CD8-positive, alpha-beta T cell (primary cell): ENCODE measurements at regions of chrX and their contacts with region 1.

Region 1: DNA sequence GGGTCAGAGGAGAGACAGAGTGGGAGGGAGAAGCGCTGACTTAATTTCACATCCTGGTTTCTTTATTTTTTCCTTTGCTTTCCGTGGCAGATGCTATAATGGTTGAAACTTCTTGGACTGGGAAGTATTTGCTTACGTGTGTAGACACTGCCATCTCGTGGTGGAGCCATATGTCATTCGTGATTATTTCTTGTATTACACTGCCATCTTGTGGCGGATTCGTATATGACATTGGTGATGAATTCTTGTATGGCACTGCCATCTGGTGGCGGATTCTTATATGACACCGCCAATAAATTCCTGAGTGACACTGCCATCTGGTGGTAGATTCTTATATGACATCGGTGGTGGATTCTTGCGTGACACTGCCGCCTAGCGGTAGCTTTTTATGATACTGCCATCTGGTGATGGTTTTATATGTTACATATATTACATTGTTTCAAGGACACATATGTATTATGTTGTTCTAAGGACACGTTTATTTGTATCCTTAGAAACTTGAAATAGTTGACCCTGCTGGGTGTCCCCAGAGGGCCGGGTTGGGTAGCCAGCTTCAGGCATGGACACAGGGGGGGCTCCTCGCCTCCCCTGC is 37.3 kb upstream of the CLCN4 start:
- DNase-seq: peak; percentile 43 to 90 (median 67)
- ATAC-seq: peak; percentile 72
- H3K4me3 ChIP-seq: no peak overlapping the region
- H3K4me3 Mint-ChIP-seq: no peak overlapping the region
- H3K27ac ChIP-seq: peak overlapping the region in 1 of 2 experiments; percentile 36
- H3K27ac Mint-ChIP-seq: peak overlapping the region; percentile 34
- H3K4me1 ChIP-seq: no peaks in the 10 kb centered on the region
- H3K4me1 Mint-ChIP-seq: peaks cover 25% of the 10 kb centered on the region
- H3K27me3 ChIP-seq: no peaks in the 10 kb centered on the region
- H3K27me3 Mint-ChIP-seq: no peaks in the 10 kb centered on the region
- CTCF ChIP-seq: peak; percentile 99

Region 2: DNA sequence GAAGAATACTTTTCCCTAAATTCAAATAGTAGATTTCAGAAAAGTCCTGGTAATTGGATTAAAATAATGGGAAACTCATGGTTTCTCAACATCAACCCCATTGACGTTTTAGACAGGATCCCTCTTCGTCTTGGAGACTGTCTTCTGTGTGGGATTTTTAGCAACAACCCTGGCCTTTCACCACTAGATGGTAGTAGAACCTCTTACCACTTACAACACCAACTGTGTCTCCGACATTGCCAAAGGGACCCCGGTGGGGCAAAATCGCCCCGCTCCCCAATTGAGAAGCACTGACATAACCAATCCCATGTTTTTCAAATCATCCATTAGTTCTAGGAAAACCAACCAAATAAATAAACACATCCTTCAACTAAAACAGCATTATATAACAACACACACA is 1370.6 kb before region 1 on chrX:
- CTCF ChIA-PET with region 1: interaction called, 4 read pairs
- POLR2A ChIA-PET with region 1: no interaction called
- intact Hi-C with region 1: loop called in 1 of 2 experiments (anchors 2 kb)
- DNase-seq: peak in 2 of 9 experiments; percentile 30 to 46
- ATAC-seq: no peak
- H3K4me3 ChIP-seq: no peak overlapping the region
- H3K4me3 Mint-ChIP-seq: no peak overlapping the region
- H3K27ac ChIP-seq: no peak overlapping the region
- H3K27ac Mint-ChIP-seq: no peak overlapping the region
- H3K4me1 ChIP-seq: no peaks in the 10 kb centered on the region
- H3K4me1 Mint-ChIP-seq: peaks cover 3% of the 10 kb centered on the region
- H3K27me3 ChIP-seq: no peaks in the 10 kb centered on the region
- H3K27me3 Mint-ChIP-seq: peaks cover 7% of the 10 kb centered on the region
- CTCF ChIP-seq: peak; percentile 49

Region 3: GRCh38 chrX:9873952-9874351 is 245.5 kb before region 1 on chrX:
- CTCF ChIA-PET with region 1: interaction called, 10 read pairs
- POLR2A ChIA-PET with region 1: no interaction called
- intact Hi-C with region 1: loop called (anchors 2 kb)
- DNase-seq: peak in 7 of 9 experiments; percentile 0 to 54 (median 17)
- ATAC-seq: peak; percentile 77
- H3K4me3 ChIP-seq: no peak overlapping the region
- H3K4me3 Mint-ChIP-seq: no peak overlapping the region
- H3K27ac ChIP-seq: no peak overlapping the region
- H3K27ac Mint-ChIP-seq: no peak overlapping the region
- H3K4me1 ChIP-seq: no peaks in the 10 kb centered on the region
- H3K4me1 Mint-ChIP-seq: peaks cover 13% of the 10 kb centered on the region
- H3K27me3 ChIP-seq: no peaks in the 10 kb centered on the region
- H3K27me3 Mint-ChIP-seq: peaks cover 11% of the 10 kb centered on the region
- CTCF ChIP-seq: peak; percentile 27

Region 4: GRCh38 chrX:9995855-9996339 is 123.6 kb before region 1 on chrX:
- CTCF ChIA-PET with region 1: interaction called, 89 read pairs
- POLR2A ChIA-PET with region 1: no interaction called
- intact Hi-C with region 1: loop called (anchors 1 kb)
- DNase-seq: peak; percentile 35 to 87 (median 77)
- ATAC-seq: peak; percentile 84
- H3K4me3 ChIP-seq: no peak overlapping the region
- H3K4me3 Mint-ChIP-seq: no peak overlapping the region
- H3K27ac ChIP-seq: no peak overlapping the region
- H3K27ac Mint-ChIP-seq: no peak overlapping the region
- H3K4me1 ChIP-seq: no peaks in the 10 kb centered on the region
- H3K4me1 Mint-ChIP-seq: no peaks in the 10 kb centered on the region
- H3K27me3 ChIP-seq: no peaks in the 10 kb centered on the region
- H3K27me3 Mint-ChIP-seq: no peaks in the 10 kb centered on the region
- CTCF ChIP-seq: peak; percentile 92

Region 5: DNA sequence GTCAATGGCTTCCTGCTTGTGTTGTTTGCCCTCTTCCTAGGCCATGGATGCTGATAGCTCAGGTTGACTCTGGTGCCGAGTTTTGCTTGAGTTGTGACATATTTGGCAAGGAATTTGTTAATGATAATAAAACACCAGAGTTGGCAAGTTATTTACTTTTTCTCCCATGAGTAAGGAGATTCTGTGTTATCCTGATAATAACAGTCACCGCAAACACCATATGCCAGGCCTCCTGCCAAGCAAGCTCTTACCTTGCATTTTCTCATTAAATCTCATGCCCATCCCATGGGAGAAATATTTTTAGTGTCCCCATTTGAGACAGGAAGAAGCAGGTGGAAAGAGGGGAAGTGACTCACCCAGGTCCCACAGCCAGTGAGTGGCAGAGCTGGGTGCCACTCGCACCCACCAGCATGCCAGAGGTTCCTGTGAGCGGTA is 30.1 kb before region 1 on chrX:
- CTCF ChIA-PET with region 1: interaction called, 25 read pairs
- POLR2A ChIA-PET with region 1: no interaction called
- intact Hi-C with region 1: no loop called
- DNase-seq: no peak
- ATAC-seq: no peak
- H3K4me3 ChIP-seq: no peak overlapping the region
- H3K4me3 Mint-ChIP-seq: no peak overlapping the region
- H3K27ac ChIP-seq: no peak overlapping the region
- H3K27ac Mint-ChIP-seq: no peak overlapping the region
- H3K4me1 ChIP-seq: peaks cover 12% of the 10 kb centered on the region
- H3K4me1 Mint-ChIP-seq: peaks cover 27% of the 10 kb centered on the region
- H3K27me3 ChIP-seq: no peaks in the 10 kb centered on the region
- H3K27me3 Mint-ChIP-seq: no peaks in the 10 kb centered on the region
- CTCF ChIP-seq: no peak

Region 6: GRCh38 chrX:10379878-10380277 is 260.4 kb after region 1 on chrX:
- CTCF ChIA-PET with region 1: no interaction called
- POLR2A ChIA-PET with region 1: no interaction called
- intact Hi-C with region 1: no loop called
- DNase-seq: no peak
- ATAC-seq: no peak
- H3K4me3 ChIP-seq: no peak overlapping the region
- H3K4me3 Mint-ChIP-seq: no peak overlapping the region
- H3K27ac ChIP-seq: no peak overlapping the region
- H3K27ac Mint-ChIP-seq: no peak overlapping the region
- H3K4me1 ChIP-seq: no peaks in the 10 kb centered on the region
- H3K4me1 Mint-ChIP-seq: no peaks in the 10 kb centered on the region
- H3K27me3 ChIP-seq: no peaks in the 10 kb centered on the region
- H3K27me3 Mint-ChIP-seq: no peaks in the 10 kb centered on the region
- CTCF ChIP-seq: no peak

Region 7: DNA sequence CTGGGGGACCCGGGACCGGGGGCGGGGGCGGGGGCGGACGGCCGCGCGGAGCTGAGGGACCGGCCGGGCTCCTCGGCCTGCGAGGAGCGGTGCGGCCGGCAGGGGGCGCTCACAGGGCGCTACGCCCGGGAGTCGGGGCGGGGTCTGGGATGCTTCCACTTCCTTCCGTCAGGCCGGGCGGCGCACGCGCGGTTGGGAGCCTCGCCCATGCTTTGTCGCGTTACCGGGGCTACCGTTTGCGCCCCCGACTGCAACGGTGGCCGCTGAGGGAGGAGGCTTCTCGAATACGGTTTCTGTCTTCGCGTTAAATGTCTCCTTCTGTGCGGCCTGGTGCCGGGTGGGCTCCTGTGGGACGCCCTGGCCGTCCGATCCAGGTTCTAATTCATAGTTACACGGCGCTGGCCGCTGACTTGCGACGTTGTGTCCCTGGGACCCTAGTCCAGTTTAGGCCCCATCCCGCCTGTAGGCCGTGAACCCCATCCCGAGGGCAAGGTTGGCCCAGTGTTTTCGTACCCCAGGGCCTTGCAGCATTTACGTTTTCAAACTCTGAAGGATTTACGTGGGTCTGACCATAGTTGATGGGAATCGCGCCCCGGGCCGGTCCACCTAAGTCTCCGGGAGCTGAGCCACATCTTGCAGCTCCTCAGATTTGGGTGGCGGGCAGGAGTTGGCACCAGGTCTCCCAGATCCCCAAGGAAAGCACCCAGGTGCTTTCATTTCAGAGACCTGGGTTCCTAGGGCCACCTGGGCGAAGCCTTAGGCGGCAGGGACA is 1639.1 kb after region 1 on chrX:
- CTCF ChIA-PET with region 1: no interaction called
- POLR2A ChIA-PET with region 1: no interaction called
- intact Hi-C with region 1: loop called in 1 of 2 experiments (anchors 10 kb)
- DNase-seq: peak; percentile 76 to 93 (median 89)
- ATAC-seq: peak; percentile 61
- H3K4me3 ChIP-seq: peak overlapping the region; percentile 76 to 91
- H3K4me3 Mint-ChIP-seq: peak overlapping the region; percentile 88
- H3K27ac ChIP-seq: peak overlapping the region; percentile 87 to 93
- H3K27ac Mint-ChIP-seq: peak overlapping the region; percentile 97
- H3K4me1 ChIP-seq: peaks cover 18% of the 10 kb centered on the region
- H3K4me1 Mint-ChIP-seq: peaks cover 34% of the 10 kb centered on the region
- H3K27me3 ChIP-seq: no peaks in the 10 kb centered on the region
- H3K27me3 Mint-ChIP-seq: no peaks in the 10 kb centered on the region
- CTCF ChIP-seq: peak; percentile 62